ENCODE measurements at regions of chr6 and their contacts with region 1.

Region 1: DNA sequence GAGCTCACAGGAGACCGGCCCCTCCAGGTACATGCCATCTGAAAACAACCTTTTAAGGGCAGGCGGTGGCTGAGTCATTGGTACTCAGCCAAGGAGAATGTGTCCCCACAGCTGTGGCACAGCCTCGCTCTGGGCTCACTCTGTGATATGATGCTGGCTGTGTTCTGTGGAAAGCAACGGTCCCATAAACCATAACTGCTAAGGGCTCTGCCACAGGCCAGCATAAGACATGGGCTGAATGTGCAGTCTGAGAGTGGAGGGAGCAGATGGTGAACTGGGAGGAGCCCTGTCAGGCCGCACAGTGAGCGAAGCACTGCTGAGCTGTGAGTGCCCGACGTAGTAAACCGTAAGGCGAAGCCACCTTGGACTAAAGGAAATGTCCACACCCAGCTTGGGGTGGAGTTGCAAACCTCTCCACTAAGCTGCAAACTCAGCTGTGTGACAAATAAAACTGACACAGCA is 375.8 kb downstream of the THBS2 start:
- DNase-seq: peak in 1 of 2 donors; percentile 50
- H3K4me3 ChIP-seq: no peak overlapping the region
- H3K27ac ChIP-seq: no peak overlapping the region
- H3K4me1 ChIP-seq: no peaks in the 10 kb centered on the region
- H3K27me3 ChIP-seq: peaks cover 0 to 6% of the 10 kb centered on the region in 2 donors
- CTCF ChIP-seq: no peak
- POLR2A ChIP-seq: no peak

Region 2: GRCh38 chr6:168514216-168514615 is 363.6 kb before region 1 on chr6:
- intact Hi-C with region 1: no loop called
- DNase-seq: peak in 1 of 2 donors; percentile 68
- H3K4me3 ChIP-seq: no peak overlapping the region
- H3K27ac ChIP-seq: peak overlapping the region in 1 of 2 donors; percentile 80
- H3K4me1 ChIP-seq: no peaks in the 10 kb centered on the region
- H3K27me3 ChIP-seq: no peaks in the 10 kb centered on the region
- CTCF ChIP-seq: no peak
- POLR2A ChIP-seq: no peak

Region 3: DNA sequence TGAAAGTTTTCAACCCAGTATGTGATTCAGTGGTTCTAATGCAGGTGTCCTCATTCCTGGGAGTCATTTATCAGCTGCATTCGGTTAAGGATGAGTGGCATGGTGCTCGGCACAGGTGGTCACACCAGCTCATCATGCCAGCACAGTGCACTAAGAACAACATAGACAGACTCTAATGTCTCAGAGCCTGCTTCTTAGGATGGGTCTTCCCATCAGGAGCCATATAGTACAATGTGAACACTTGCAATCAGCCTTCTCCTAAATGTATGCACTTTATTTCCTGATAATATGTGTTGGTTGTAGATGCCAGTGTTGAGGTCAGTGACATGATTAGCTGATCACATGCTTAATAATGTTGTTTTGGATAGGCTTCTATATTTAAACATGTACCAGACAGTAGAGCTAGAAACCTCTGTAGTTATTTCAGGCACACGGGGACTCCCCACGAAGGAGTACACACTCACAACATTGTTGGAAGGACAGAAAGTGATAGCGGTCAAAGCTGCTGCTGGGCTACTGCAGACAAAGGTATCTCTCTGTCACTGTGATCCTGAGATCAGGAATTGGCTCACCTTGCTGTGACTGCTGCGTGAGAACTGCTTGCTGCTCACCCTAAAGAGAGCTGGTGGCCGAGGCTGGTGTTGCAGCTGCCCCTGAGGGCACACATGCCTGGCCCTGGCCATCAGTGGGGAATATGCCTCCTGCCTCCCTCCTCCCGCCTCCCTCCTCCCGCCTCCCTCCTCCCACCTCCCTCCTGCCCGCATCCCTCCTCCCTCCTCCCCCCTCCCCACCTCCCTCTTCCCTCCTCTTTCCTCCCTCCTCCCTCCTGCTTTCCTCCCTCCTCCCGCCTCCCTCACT is 241.5 kb before region 1 on chr6:
- intact Hi-C with region 1: loop called (anchors 10 kb)
- DNase-seq: no peak
- H3K4me3 ChIP-seq: no peak overlapping the region
- H3K27ac ChIP-seq: no peak overlapping the region
- H3K4me1 ChIP-seq: no peaks in the 10 kb centered on the region
- H3K27me3 ChIP-seq: no peaks in the 10 kb centered on the region
- CTCF ChIP-seq: no peak
- POLR2A ChIP-seq: no peak

Measured in breast epithelium (tissue), 4 donors.